ENCODE measurements at regions of chr15 and their contacts with region 1.

Region 1: DNA sequence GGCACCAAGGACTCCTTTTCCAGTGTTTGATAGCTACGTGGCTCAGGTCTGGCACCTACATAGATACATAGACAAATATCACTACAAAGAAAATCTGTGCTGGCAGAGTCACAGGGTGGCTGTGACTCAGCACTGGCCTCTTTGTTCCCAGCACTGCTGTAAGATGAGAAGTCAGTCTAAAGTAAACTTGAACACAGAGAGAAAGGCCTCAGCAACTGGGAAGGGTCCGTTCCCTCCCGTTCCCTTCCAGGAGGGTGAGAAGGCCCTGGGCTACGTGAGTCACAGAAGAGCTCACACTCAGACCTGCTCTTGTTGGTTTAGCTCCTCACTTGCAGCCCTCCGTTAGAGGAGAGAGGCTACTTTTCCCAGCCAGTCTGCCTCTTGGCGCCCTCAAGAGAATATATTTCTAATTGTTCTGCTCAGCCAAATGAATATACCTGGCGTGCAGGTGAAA is 23.1 kb downstream of the ANXA2 start:
- DNase-seq: no peak
- ATAC-seq: no peak
- H3K4me3 ChIP-seq: no peak overlapping the region
- H3K4me3 Mint-ChIP-seq: no peak overlapping the region
- H3K27ac ChIP-seq: no peak overlapping the region
- H3K27ac Mint-ChIP-seq: no peak overlapping the region
- H3K4me1 ChIP-seq: peaks cover 8% of the 10 kb centered on the region
- H3K4me1 Mint-ChIP-seq: no peaks in the 10 kb centered on the region
- H3K27me3 ChIP-seq: no peaks in the 10 kb centered on the region
- H3K27me3 Mint-ChIP-seq: no peaks in the 10 kb centered on the region
- CTCF ChIP-seq: no peak

Region 2: GRCh38 chr15:59410391-59410896 is 964.2 kb before region 1 on chr15:
- CTCF ChIA-PET with region 1: no interaction called
- POLR2A ChIA-PET with region 1: no interaction called
- intact Hi-C with region 1: loop called in 1 of 2 experiments (anchors 5 kb)
- DNase-seq: no peak
- ATAC-seq: no peak
- H3K4me3 ChIP-seq: no peak overlapping the region
- H3K4me3 Mint-ChIP-seq: no peak overlapping the region
- H3K27ac ChIP-seq: no peak overlapping the region
- H3K27ac Mint-ChIP-seq: no peak overlapping the region
- H3K4me1 ChIP-seq: peaks cover 12% of the 10 kb centered on the region
- H3K4me1 Mint-ChIP-seq: peaks cover 10% of the 10 kb centered on the region
- H3K27me3 ChIP-seq: no peaks in the 10 kb centered on the region
- H3K27me3 Mint-ChIP-seq: peaks cover 4% of the 10 kb centered on the region
- CTCF ChIP-seq: no peak

Region 3: DNA sequence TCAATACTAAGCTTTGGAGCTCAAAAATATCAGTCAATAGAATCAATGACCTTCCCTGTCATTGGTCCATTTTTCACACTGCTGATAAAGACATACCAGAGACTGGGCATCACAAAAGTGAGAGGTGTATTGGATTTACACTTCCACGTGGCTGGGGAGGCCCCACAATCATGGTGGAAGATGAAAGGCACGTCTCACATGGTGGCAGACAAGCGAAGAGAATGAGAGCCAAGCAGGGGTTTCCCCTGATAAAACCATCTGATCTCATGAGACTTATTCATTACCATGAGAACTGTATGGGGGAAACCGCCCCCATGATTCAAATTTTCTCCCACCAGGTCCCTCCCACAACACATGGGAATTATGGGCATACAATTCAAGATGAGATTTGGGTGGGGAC is 58.8 kb before region 1 on chr15:
- CTCF ChIA-PET with region 1: no interaction called
- POLR2A ChIA-PET with region 1: no interaction called
- intact Hi-C with region 1: loop called in 1 of 2 experiments (anchors 10 kb)
- DNase-seq: no peak
- ATAC-seq: no peak
- H3K4me3 ChIP-seq: no peak overlapping the region
- H3K4me3 Mint-ChIP-seq: no peak overlapping the region
- H3K27ac ChIP-seq: no peak overlapping the region
- H3K27ac Mint-ChIP-seq: no peak overlapping the region
- H3K4me1 ChIP-seq: no peaks in the 10 kb centered on the region
- H3K4me1 Mint-ChIP-seq: no peaks in the 10 kb centered on the region
- H3K27me3 ChIP-seq: peaks cover 0 to 4% of the 10 kb centered on the region in 2 experiments
- H3K27me3 Mint-ChIP-seq: peaks cover 5% of the 10 kb centered on the region
- CTCF ChIP-seq: no peak

Region 4: DNA sequence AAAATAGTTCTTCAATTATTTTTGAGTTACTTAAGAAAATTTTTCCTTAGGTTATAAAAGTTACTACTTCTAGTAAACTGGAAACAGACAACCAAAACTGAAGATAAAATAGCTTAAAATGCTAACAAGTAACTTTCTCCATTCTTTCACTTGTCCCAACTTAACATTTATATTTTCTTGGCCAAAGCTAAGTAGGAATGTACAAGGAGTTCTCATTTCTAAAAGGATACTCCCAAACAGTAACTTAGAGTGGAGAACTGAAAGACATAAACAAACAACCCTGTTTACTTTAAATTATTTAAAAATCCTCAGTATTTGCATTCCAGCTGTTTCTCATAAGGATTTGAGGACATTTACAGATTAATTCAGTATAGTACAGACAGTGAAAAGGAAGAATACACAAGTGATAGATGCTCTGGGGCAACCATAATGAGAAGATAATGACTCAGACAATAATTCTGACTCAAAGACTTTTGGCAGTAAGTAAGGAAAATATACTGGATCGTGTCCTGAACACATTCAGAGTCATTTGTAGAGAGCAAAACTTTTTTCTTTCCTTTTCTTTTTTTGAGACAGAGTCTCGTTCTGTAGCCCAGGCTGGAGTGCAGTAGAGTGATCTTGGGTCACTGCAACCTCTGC is 52.3 kb after region 1 on chr15:
- CTCF ChIA-PET with region 1: no interaction called
- POLR2A ChIA-PET with region 1: no interaction called
- intact Hi-C with region 1: loop called in 1 of 2 experiments (anchors 5 kb)
- DNase-seq: no peak
- ATAC-seq: no peak
- H3K4me3 ChIP-seq: no peak overlapping the region
- H3K4me3 Mint-ChIP-seq: no peak overlapping the region
- H3K27ac ChIP-seq: no peak overlapping the region
- H3K27ac Mint-ChIP-seq: no peak overlapping the region
- H3K4me1 ChIP-seq: no peaks in the 10 kb centered on the region
- H3K4me1 Mint-ChIP-seq: peaks cover 6% of the 10 kb centered on the region
- H3K27me3 ChIP-seq: no peaks in the 10 kb centered on the region
- H3K27me3 Mint-ChIP-seq: no peaks in the 10 kb centered on the region
- CTCF ChIP-seq: no peak

Measured in CD4-positive, alpha-beta T cell (primary cell).